Activated naive CD4-positive, alpha-beta T cell treated with anti-CD3 and anti-CD28 coated beads for 36 hours (primary cell): ENCODE measurements at regions of chr3 and their contacts with region 1.

Region 1: DNA sequence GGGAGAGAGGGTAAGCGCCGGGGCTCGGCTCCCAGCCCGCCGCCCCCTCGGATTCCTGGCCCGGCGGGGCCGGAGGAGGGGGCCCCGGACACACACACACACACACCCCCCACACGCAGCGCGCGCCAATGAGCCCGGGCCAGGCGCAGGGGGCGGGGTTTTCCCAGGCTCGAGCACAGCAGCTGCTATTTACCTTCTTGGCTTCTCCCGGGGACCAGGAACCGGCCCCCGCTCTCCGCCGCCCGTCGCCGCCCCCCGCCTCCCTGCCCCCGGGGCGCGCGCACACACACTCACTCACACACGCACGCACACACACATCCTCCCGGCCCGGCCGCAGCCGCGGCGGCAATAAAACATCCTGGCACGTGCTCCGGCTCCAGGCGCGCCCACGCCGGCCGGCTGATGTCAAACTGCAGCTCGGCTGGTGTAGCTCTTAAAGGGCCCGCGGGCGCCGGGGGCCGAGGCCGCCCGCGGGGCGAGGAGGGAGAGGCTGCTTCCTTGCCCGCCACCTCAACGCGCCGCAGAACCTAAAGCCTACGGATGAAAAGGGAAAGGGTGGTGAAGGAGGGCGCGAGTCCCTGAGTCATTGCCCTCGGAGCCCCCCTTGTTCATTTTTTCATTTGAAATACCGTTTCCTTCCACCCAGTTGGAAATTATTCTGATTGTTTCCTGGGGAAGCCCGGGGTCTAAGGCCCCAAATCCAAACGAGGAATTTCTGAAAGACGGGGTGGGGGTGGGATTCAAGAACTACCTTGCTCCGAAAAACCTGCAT is 1.0 kb upstream of the HES1 start:
- DNase-seq: peak; percentile 89
- H3K4me3 Mint-ChIP-seq: peak overlapping the region; percentile 84
- H3K27ac Mint-ChIP-seq: peak overlapping the region; percentile 90
- H3K4me1 Mint-ChIP-seq: peaks cover 41% of the 10 kb centered on the region
- H3K27me3 Mint-ChIP-seq: peaks cover 54% of the 10 kb centered on the region

Region 2: GRCh38 chr3:193665370-193665989 is 469.5 kb before region 1 on chr3:
- CTCF ChIA-PET with region 1: interaction called, 3 read pairs
- intact Hi-C with region 1: loop called (anchors 5 kb)
- DNase-seq: no peak
- H3K4me3 Mint-ChIP-seq: no peak overlapping the region
- H3K27ac Mint-ChIP-seq: no peak overlapping the region
- H3K4me1 Mint-ChIP-seq: no peaks in the 10 kb centered on the region
- H3K27me3 Mint-ChIP-seq: no peaks in the 10 kb centered on the region

Region 3: DNA sequence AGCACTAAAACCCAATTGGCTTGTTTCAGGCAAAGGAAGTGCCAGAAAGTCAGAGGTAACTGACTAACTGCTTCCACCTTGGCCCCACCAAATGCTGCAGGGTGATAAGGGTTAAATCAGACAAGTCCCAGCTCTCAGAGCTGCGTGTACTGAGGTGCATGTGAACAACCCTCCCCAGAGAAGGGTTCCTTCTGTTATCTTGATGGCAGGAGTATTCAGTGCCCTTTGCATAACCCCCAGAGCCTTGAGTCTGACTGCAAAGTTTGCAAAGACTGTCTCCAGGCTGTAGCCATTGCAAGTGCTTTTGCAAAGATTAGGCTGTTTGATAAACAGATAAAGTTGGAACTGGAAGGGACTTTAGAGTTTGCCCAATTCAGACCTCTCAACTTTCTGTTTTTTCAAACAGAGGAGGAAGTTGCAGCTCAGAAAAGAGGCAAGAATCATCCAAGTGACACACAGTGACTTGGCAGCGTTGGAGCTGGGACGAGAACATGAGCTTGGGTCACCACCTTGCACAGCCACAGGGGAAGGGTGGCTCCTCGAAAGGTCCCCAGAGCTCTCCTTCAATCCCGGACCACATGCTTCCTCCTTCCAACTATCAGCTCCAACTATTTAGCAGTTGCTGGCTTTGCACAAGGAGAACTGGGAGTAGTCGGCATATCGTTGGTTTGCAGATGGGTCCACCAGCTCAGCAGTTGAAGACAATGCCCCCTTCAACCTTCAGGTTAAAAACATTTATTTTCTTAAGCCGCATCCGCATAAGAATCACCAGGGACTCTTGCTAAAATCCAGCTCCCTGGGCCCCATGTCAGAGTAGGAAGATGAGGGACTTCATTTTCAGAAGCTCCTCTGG is 223.8 kb before region 1 on chr3:
- CTCF ChIA-PET with region 1: no interaction called
- intact Hi-C with region 1: loop called (anchors 5 kb)
- DNase-seq: peak; percentile 54
- H3K4me3 Mint-ChIP-seq: no peak overlapping the region
- H3K27ac Mint-ChIP-seq: peak overlapping the region; percentile 80
- H3K4me1 Mint-ChIP-seq: peaks cover 35% of the 10 kb centered on the region
- H3K27me3 Mint-ChIP-seq: no peaks in the 10 kb centered on the region

Region 4: GRCh38 chr3:194046995-194047645 is 87.8 kb before region 1 on chr3:
- CTCF ChIA-PET with region 1: no interaction called
- intact Hi-C with region 1: no loop called
- DNase-seq: no peak
- H3K4me3 Mint-ChIP-seq: no peak overlapping the region
- H3K27ac Mint-ChIP-seq: no peak overlapping the region
- H3K4me1 Mint-ChIP-seq: peaks cover 4% of the 10 kb centered on the region
- H3K27me3 Mint-ChIP-seq: no peaks in the 10 kb centered on the region

Region 5: GRCh38 chr3:194089357-194090177 is 45.4 kb before region 1 on chr3:
- CTCF ChIA-PET with region 1: no interaction called
- intact Hi-C with region 1: no loop called
- DNase-seq: peak; percentile 68
- H3K4me3 Mint-ChIP-seq: no peak overlapping the region
- H3K27ac Mint-ChIP-seq: peak overlapping the region; percentile 36
- H3K4me1 Mint-ChIP-seq: peaks cover 3% of the 10 kb centered on the region
- H3K27me3 Mint-ChIP-seq: no peaks in the 10 kb centered on the region

Region 6: DNA sequence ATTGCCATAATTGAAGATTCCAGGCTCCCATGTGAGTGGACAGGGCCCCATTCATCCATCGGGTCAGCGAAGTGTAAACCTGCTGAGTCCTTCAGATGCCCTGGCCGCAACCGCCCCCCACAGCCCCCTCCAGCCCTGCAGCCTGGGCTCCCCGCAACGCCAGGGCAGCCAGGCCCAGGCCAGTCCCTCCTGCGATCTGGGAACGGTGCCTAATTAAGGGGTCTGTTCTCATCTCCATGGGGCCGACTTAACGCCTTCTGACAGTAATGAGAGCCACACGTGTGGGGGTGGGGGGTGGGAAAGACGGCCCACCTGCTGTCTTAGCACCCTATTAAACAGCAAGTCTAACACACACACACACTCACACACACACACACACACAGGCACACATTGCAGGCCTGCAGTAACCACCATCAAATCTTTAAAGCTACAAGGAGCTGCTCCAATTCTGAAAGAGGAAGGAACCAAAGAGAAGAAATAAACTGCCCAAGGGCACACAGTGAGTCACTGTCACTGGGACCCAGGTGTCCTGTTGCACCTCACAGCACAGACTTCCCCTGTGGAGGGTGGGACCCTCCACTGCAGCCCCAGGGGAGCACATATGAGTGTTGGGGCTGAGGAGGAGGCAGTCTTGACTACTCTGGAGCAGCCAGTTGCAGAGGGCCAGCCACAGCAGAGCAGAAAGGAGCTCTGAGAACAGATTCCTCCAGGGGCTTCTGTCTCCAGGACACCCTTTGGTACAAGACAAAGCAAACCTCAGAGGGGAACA is 30.8 kb before region 1 on chr3:
- CTCF ChIA-PET with region 1: interaction called, 3 read pairs
- intact Hi-C with region 1: loop called (anchors 2 kb)
- DNase-seq: no peak
- H3K4me3 Mint-ChIP-seq: no peak overlapping the region
- H3K27ac Mint-ChIP-seq: no peak overlapping the region
- H3K4me1 Mint-ChIP-seq: peaks cover 13% of the 10 kb centered on the region
- H3K27me3 Mint-ChIP-seq: peaks cover under 1% of the 10 kb centered on the region

Region 7: GRCh38 chr3:194161131-194162045 is 26.4 kb after region 1 on chr3:
- CTCF ChIA-PET with region 1: no interaction called
- intact Hi-C with region 1: no loop called
- DNase-seq: no peak
- H3K4me3 Mint-ChIP-seq: no peak overlapping the region
- H3K27ac Mint-ChIP-seq: no peak overlapping the region
- H3K4me1 Mint-ChIP-seq: no peaks in the 10 kb centered on the region
- H3K27me3 Mint-ChIP-seq: peaks cover 12% of the 10 kb centered on the region

Region 8: DNA sequence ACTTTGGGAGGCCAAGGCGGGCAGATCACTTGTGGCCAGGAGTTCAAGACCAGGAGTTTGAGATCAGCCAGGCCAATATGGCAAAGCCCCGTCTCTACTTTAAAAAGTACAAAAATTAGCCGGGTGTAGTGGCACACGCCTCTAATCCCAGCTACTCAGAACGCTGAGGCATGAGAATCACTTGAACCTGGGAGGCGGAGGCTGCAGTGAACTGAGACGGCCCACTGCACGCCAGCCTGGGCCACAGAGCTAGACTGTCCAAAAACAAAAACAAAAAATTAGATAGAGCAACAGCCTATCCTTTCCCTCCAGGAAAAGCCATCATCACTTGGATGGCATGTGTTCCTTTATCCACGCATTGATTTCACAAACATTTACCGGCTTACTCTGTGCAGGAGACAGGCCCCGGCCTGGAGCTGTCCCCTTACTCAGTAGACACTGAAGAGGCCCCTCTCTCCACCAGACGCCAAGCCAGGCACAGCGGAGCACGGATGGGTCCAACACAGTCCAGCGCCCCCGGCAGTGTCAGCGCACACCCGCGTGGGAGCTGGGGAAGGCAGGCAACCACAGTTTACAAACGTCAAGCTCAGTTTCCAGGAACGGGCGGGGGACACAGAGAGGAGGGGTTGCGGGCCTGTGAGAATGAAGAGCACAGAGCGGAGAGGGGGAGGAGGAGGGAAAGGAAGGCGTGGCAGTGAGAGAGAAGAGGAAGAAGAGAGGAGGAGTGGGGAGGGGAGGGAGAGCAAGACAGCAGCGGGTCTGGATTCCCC is 261.0 kb after region 1 on chr3:
- CTCF ChIA-PET with region 1: no interaction called
- intact Hi-C with region 1: loop called (anchors 2 kb)
- DNase-seq: peak; percentile 85
- H3K4me3 Mint-ChIP-seq: peak overlapping the region; percentile 42
- H3K27ac Mint-ChIP-seq: peak overlapping the region; percentile 21
- H3K4me1 Mint-ChIP-seq: peaks cover 53% of the 10 kb centered on the region
- H3K27me3 Mint-ChIP-seq: peaks cover 5% of the 10 kb centered on the region